Posterior vena cava (tissue), 2 donors: ENCODE measurements at regions of chr11 and their contacts with region 1.

Region 1: DNA sequence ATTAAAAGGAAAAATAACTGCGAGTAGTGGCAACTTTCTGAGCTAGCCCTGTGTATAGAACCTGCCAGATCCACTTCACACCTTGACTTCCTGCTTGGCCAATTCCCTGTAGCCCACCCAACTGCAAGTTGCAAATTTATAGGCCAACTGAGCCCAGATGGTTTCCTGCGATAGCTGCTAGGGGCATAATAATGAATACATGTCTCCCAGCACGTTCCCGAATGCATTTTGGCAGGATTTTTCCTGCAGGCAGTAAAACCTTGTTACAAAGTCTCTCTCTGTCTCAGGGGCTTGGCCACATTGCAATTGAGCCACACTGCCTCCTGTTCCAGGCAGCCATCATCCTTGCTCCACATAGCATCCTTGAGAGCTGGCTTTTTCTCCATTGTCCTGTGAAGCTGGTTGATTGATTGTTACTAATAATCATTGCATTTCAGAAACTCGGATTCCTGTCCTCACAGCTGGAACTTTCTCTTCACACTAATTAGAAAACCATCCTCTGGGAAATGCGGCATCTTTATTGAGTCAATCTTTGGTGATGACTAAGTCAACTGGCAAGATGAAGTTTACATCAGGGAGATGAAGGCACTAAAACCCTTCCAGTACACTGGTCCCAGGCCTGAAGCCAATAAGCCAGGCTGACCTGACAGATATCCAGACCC is 18.6 kb upstream of the LMO2 start:
- DNase-seq: no peak

Region 2: DNA sequence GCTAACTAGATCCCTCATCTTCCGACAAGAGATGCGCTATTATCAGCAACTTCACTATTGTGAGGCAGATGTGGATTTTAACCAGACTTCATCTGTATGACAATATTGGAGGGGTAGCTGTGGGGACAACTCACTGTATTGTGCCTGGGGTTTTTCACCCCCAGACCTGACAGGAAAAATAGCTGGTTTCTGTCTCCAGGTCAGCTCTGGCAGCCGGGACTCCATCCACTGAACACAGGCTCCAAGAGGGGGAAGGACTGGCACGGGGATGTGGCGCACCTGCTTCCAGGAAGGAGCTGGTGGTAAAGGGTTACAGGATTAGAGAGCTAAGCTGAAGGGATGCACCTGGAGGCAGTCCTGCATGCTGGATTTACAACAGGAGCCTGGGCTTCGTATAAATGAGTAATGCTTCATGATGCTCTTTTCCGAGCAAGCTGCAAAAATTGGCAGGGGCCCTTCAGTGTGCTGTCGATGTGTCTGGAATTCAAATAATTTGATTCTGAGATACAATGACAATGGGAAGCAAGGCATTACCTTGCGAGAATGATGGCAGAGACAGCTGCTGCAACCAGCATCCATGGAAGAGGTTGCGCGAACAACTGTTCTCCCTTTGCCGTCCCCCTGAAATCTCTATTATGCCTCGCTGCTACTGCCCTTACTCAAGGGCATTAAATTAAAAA is 68.1 kb before region 1 on chr11:
- intact Hi-C with region 1: no loop called
- DNase-seq: no peak

Region 3: DNA sequence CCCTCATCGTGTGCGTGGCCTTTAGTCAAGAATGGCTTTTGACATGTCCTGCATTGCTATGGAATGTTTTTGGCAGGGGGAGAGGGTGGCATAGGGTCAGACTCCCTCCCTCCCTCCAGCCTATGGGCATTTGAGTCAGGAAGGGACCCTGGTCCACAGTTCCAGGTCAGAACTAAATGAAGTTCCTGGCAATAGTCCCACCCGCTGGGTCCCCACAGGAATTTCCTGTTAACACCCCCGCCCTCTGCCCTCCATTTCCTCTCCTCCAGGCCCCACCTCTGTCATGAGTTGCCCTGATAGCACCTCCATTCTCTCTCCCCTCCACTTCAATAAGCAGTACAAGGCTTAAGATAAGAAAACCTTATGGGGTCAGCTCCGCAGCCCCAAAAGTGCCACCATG is 22.3 kb after region 1 on chr11:
- intact Hi-C with region 1: loop called in 1 of 2 experiments (anchors 1 kb)
- DNase-seq: no peak

Region 4: DNA sequence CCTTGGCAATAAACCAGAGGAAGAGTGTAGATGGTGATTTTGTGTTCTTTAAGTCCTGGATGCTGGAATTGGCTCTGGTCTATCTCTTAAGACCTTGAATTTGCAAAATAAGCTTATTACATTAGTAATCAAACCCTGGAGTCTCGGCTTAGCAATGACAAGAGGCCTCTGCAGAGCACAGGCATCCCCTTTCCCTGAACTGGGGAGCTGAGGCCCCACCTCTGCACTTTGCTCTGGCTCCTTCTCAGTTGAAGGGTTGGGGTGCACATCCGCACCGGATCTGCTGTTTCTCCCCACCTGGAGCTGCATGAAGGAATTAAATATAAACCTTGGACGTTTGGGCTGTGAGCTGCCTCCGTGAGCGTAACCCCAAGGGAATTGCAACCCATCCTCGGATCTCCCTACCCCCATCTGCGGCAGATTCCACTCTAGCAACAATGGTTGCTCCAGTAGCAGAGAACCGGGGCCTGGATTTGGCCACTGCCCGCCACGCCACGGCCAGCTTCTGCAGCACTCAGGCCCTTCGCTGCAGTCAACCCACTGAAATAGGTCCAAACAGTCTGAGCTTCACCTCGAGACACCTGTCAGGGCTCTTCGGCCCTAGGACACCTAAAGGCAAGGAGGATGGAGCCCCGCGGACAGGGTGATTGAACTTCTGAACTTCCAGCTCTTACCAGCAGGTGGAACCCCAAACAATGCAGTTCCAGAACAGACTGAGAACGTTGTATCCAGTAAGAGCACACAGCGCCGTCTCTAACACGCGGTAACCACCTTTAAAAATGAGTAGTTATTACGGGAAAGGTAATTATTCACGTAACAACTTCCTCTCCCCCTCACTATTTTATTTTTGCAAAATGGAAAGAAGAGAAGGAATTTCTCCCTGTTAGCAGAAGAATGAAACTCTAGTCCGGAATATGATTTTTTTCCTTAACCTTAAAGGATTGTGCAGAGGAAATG is 86.3 kb after region 1 on chr11:
- intact Hi-C with region 1: no loop called
- DNase-seq: no peak